ENCODE measurements at regions of chr12 and their contacts with region 1.

Region 1: GRCh38 chr12:132144115-132144812 is at the starts of genes DDX51 and NOC4L:
- DNase-seq: peak; percentile 99
- H3K4me3 ChIP-seq: peak within 1 kb of the TSS; percentile 80 to 99 (median 90)
- H3K27ac ChIP-seq: peak within 1 kb of the TSS; percentile 85 to 96 (median 90)
- H3K4me1 ChIP-seq: peaks cover 23 to 53% (median 32%) of the 10 kb centered on the region in 4 donors
- H3K27me3 ChIP-seq: no peaks in the 10 kb centered on the region
- CTCF ChIP-seq: peak in 1 of 3 experiments; percentile 43
- EP300 ChIP-seq: no peak
- POLR2A ChIP-seq: no peak
- total RNA-seq, gene DDX51: 9.1 to 12.8 (median 11.3) TPM
- total RNA-seq, gene NOC4L: 10.4 to 15.4 (median 11.5) TPM

Region 2: DNA sequence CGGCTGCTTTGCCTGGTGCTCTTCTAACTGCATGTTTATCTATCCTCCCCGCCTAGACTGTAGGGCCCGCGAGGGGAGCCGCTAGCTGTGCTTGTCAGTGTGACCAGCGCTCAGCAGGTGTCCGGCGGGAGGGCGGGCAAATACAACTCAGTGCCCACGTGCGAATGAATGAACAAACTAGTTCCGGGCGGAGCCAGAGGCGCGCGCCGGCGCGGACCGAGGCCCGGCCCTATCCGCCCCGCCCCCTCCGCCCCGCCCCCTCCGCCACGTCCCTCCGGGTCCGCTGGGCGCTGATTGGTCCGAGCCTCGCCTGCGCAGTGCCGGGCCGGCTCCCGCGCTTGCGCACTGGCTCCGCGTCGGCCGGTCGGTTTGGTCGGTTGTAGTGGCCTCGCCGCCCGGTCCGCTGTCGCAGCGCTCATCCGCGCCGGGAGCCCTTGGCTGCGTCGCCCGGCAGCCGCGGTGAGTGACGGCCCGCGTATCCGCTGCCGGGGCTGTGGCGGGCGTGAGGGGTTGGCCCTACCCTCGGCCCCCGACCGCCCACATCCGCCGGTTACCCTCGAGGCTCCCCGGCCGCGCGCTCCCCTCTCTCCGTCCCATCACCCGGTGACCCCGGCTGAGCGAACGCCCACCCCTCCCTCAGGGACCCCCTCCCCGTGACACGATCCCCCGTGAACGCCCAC is 60.2 kb before region 1 on chr12:
- intact Hi-C with region 1: loop called (anchors 5 kb)
- DNase-seq: peak; percentile 97
- H3K4me3 ChIP-seq: peak overlapping the region; percentile 95 to 99 (median 98)
- H3K27ac ChIP-seq: peak overlapping the region; percentile 88 to 95 (median 93)
- H3K4me1 ChIP-seq: peaks cover 13 to 23% (median 22%) of the 10 kb centered on the region in 4 donors
- H3K27me3 ChIP-seq: no peaks in the 10 kb centered on the region
- CTCF ChIP-seq: no peak
- EP300 ChIP-seq: no peak
- POLR2A ChIP-seq: peak; percentile 81

Region 3: GRCh38 chr12:132189378-132190011 is 45.2 kb after region 1 on chr12:
- intact Hi-C with region 1: loop called (anchors 2 kb)
- DNase-seq: peak; percentile 96
- H3K4me3 ChIP-seq: peak overlapping the region; percentile 57 to 77 (median 66)
- H3K27ac ChIP-seq: peak overlapping the region; percentile 68 to 82 (median 78)
- H3K4me1 ChIP-seq: peaks cover 9 to 25% (median 22%) of the 10 kb centered on the region in 4 donors
- H3K27me3 ChIP-seq: no peaks in the 10 kb centered on the region
- CTCF ChIP-seq: peak in 1 of 3 experiments; percentile 26
- EP300 ChIP-seq: no peak
- POLR2A ChIP-seq: no peak

Region 4: DNA sequence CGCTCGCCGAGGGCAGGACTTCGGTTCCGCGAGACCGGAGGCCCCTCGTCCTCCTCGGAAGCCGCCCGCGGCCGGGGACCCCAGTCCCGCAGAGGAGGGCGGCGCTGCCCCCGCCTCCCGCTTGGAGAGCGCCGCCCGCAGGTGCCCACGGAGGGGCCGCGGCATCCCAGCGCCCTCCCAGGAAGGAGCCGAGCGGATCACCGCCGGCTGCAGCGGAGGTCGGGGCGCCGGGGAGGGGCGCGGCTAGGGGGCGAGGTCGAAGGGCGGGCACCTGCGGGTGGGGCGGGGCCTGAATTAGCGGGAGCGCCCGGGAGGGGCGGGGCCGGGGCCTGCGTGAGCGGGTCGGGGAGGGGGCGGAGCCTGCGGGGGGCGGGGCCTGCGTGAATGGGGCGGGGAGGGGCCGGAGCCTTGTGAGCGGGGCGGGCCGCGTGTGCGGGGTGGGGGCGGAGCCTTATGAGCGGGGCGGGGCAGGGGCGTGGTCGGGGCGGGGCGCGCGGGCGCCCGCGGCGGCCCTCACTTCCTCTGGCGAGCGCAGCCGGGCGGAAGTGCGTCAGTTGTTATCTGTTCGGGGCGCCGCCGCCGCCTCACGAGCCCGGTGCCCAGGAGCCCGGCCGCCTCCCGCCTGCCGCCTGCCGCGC is 345.5 kb after region 1 on chr12 and contains the start of gene FBRSL1:
- intact Hi-C with region 1: loop called (anchors 10 kb)
- DNase-seq: peak; percentile 97
- H3K4me3 ChIP-seq: peak within 1 kb of the TSS; percentile 87 to 95 (median 91)
- H3K27ac ChIP-seq: peak within 1 kb of the TSS; percentile 78 to 84 (median 82)
- H3K4me1 ChIP-seq: peaks cover 39 to 59% (median 53%) of the 10 kb centered on the region in 4 donors
- H3K27me3 ChIP-seq: no peaks in the 10 kb centered on the region
- CTCF ChIP-seq: no peak
- EP300 ChIP-seq: no peak
- POLR2A ChIP-seq: no peak
- total RNA-seq, gene FBRSL1: 14.4 to 28.1 (median 18.5) TPM

Measured in esophagus muscularis mucosa (tissue), 4 donors.